ENCODE measurements at regions of chr18 and their contacts with region 1.

Region 1: GRCh38 chr18:34576622-34577021 is 133.5 kb upstream of the DTNA start:
- DNase-seq: no peak
- ATAC-seq: no peak
- H3K4me3 Mint-ChIP-seq: no peak overlapping the region
- H3K27ac Mint-ChIP-seq: no peak overlapping the region
- H3K4me1 Mint-ChIP-seq: no peaks in the 10 kb centered on the region
- H3K27me3 Mint-ChIP-seq: no peaks in the 10 kb centered on the region

Region 2: DNA sequence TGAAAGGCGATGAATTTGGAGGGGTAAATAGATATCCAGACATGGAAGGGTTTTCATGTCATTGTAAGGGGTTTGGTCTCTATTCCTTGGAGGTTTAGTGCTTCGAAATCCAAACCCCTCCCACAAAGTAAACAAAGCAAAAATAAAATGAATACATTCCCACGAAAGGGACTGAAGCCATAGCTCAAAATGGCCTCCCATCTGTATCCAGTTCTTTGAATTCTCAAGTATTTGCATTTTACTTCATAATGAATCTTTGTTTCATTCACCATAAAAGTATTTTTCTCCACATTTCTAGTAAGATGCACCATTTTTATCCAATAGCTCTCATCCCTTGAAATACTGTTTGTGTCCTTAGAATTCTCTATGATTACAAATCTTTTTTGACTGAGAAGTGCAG is 30.2 kb after region 1 on chr18:
- CTCF ChIA-PET with region 1: no interaction called
- POLR2A ChIA-PET with region 1: no interaction called
- intact Hi-C with region 1: loop called in 1 of 2 experiments (anchors 1 kb)
- DNase-seq: no peak
- ATAC-seq: no peak
- H3K4me3 Mint-ChIP-seq: no peak overlapping the region
- H3K27ac Mint-ChIP-seq: no peak overlapping the region
- H3K4me1 Mint-ChIP-seq: no peaks in the 10 kb centered on the region
- H3K27me3 Mint-ChIP-seq: no peaks in the 10 kb centered on the region

Region 3: GRCh38 chr18:34676816-34677574 is 100.4 kb after region 1 on chr18:
- CTCF ChIA-PET with region 1: no interaction called
- POLR2A ChIA-PET with region 1: no interaction called
- intact Hi-C with region 1: no loop called
- DNase-seq: no peak
- ATAC-seq: no peak
- H3K4me3 Mint-ChIP-seq: no peak overlapping the region
- H3K27ac Mint-ChIP-seq: no peak overlapping the region
- H3K4me1 Mint-ChIP-seq: no peaks in the 10 kb centered on the region
- H3K27me3 Mint-ChIP-seq: peaks cover 6% of the 10 kb centered on the region